ENCODE measurements at regions of chr6 and their contacts with region 1.

Region 1: DNA sequence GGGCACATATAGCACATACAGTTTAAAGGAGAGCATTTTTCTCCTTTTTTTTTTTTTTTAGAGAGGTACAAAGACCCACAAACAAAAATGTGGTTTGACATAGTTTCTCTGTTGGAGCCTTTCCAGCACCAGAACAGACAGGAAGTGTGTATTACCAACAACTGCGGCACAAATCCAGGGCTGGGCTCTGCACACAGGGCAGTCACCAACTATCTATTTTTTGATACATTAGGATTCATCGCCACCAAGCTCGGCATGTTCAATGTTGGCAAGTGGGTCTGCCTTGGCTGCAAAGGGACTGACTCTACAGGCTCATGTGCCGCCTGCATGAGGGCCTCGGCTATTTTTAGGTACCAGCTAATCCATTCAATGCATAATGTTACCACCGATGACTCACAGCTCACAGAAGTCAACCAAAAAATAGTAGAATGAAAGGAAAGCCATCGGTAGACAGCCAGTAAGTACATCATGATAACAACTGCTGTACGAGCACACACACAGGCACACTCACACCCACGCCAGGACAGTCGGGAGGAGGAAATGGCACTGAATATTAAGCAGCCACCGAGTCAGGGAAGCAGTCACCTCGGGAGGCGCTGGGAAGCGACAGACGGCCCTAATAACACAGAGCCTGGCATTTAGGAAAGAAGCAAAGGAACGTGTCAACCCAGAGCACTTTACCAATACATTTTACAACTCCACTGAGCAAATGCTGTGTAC is 81.6 kb downstream of the GMPR start:
- DNase-seq: no peak
- ATAC-seq: peak; percentile 85

Region 2: GRCh38 chr6:16238057-16238962 is 81.7 kb before region 1 on chr6 and contains the start of gene GMPR:
- intact Hi-C with region 1: loop called (anchors 2 kb)
- DNase-seq: peak; percentile 93
- ATAC-seq: peak; percentile 88
- total RNA-seq, gene GMPR: 125 TPM

Region 3: GRCh38 chr6:16257999-16258708 is 61.8 kb before region 1 on chr6:
- intact Hi-C with region 1: no loop called
- DNase-seq: no peak
- ATAC-seq: peak; percentile 95

Region 4: DNA sequence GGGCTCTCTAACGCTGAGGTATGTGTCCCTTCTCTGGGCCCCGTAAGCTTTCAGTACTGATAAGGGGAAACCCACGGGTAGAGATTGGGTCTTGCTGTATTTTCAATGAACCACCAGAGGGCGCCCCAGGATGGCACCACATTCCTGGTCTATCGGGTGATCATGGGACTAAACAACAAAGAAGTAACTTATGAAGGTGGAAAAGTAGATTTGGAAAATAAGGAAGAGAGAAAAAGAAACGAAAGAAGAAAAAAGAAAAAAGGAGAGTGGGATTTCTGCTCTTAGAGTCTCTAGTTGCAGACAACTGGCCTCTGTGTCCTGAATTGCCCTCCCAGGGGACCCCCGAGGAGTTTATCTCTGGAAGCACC is 12.2 kb after region 1 on chr6:
- intact Hi-C with region 1: no loop called
- DNase-seq: peak; percentile 89
- ATAC-seq: peak; percentile 80

Region 5: GRCh38 chr6:16776394-16777017 is 456.5 kb after region 1 on chr6:
- intact Hi-C with region 1: no loop called
- DNase-seq: no peak
- ATAC-seq: no peak

Measured in Right ventricle myocardium inferior (tissue), 1 donor.